ENCODE measurements at regions of chr6 and their contacts with region 1.

Region 1: DNA sequence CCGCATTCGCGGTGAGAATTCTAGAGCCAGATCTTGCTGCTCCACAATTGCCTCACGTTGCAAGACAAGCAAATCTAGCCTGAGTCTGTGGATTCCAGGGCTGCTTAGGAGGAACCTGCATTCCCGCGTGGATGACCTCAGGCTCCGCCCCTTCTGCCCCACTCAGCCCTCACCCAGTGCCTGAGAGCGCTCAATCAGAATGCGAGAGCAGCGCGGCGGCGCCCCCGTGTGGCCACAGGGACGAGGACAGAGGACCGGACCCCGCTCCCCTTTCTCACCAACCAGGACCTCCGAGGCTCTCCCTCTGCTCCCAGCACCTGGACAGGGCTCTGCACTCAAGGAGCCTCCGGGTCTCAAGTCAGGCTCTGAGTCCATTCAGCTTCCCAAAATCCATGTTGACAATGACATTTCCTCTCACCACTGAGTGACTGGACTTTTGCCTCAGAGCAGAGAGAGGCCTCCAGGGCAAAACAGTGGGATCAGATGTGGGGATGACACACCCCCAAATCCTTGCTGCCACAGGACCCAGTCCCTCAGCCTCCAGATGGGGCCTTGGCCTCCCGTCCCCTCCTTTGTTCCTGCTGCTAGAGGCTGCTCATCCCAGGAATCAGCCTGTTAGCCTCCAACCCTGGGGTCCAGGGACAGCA is 52.0 kb downstream of the RPP21 start:
- DNase-seq: peak; percentile 18 to 86
- H3K4me3 ChIP-seq: no peak overlapping the region
- H3K27ac ChIP-seq: no peak overlapping the region
- H3K4me1 ChIP-seq: no peaks in the 10 kb centered on the region
- H3K27me3 ChIP-seq: no peaks in the 10 kb centered on the region
- CTCF ChIP-seq: peak; percentile 61 to 73 (median 68)

Region 2: GRCh38 chr6:30219244-30219643 is 177.7 kb before region 1 on chr6:
- intact Hi-C with region 1: loop called (anchors 2 kb)
- DNase-seq: no peak
- H3K4me3 ChIP-seq: no peak overlapping the region
- H3K27ac ChIP-seq: no peak overlapping the region
- H3K4me1 ChIP-seq: peaks cover 0 to 6% of the 10 kb centered on the region in 2 donors
- H3K27me3 ChIP-seq: no peaks in the 10 kb centered on the region
- CTCF ChIP-seq: peak; percentile 49 to 82 (median 75)